ENCODE measurements at regions of chr13 and their contacts with region 1.

Region 1: DNA sequence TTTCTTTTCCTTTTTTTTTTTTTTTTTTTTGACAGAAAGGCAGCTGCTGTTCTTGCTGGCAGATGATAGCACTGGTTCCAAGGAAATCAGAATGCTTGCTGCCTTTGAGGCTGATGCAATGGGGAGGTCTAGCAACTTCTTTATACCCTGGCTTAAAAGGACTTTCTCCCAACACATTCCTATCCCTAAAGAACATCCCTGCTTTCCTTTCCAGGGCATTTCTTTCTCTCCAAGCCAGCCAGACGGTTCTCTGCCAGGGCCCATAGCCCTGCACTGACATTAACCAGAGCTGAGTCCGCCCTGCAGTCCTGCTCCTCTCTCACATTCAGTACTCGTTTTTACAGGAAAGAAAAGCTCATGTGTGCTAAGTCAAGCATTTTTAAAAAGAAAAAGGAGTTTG is 133.9 kb upstream of the WASF3 start:
- DNase-seq: peak; percentile 51
- ATAC-seq: peak; percentile 30
- H3K4me3 ChIP-seq: no peak overlapping the region
- H3K27ac ChIP-seq: peak overlapping the region; percentile 24; the same call in 1 of the 2 replicates
- H3K4me1 ChIP-seq: peaks cover 22% of the 10 kb centered on the region
- H3K27me3 ChIP-seq: no peaks in the 10 kb centered on the region
- CTCF ChIP-seq: no peak
- POLR2A ChIP-seq: no peak
- RAD21 ChIP-seq: no peak

Region 2: GRCh38 chr13:26688286-26688685 is 264.7 kb after region 1 on chr13:
- CTCF ChIA-PET with region 1: no interaction called
- POLR2A ChIA-PET with region 1: interaction called, 13 read pairs
- dilution Hi-C with region 1: no loop called
- in situ Hi-C with region 1: no loop called
- intact Hi-C with region 1: no loop called
- DNase-seq: no peak
- ATAC-seq: no peak
- H3K4me3 ChIP-seq: no peak overlapping the region
- H3K27ac ChIP-seq: no peak overlapping the region
- H3K4me1 ChIP-seq: no peaks in the 10 kb centered on the region
- H3K27me3 ChIP-seq: no peaks in the 10 kb centered on the region
- CTCF ChIP-seq: no peak
- POLR2A ChIP-seq: no peak
- RAD21 ChIP-seq: no peak